ENCODE measurements at regions of chr18 and their contacts with region 1.

Region 1: GRCh38 chr18:62131301-62131909 is 55.5 kb downstream of the PIGN start:
- DNase-seq: peak; percentile 31
- H3K4me3 Mint-ChIP-seq: no peak overlapping the region
- H3K27ac Mint-ChIP-seq: no peak overlapping the region
- H3K4me1 Mint-ChIP-seq: no peaks in the 10 kb centered on the region
- H3K27me3 Mint-ChIP-seq: no peaks in the 10 kb centered on the region

Region 2: GRCh38 chr18:61322265-61322873 is 809.0 kb before region 1 on chr18:
- intact Hi-C with region 1: loop called (anchors 1 kb)
- DNase-seq: peak; percentile 16
- H3K4me3 Mint-ChIP-seq: no peak overlapping the region
- H3K27ac Mint-ChIP-seq: no peak overlapping the region
- H3K4me1 Mint-ChIP-seq: no peaks in the 10 kb centered on the region
- H3K27me3 Mint-ChIP-seq: no peaks in the 10 kb centered on the region

Region 3: DNA sequence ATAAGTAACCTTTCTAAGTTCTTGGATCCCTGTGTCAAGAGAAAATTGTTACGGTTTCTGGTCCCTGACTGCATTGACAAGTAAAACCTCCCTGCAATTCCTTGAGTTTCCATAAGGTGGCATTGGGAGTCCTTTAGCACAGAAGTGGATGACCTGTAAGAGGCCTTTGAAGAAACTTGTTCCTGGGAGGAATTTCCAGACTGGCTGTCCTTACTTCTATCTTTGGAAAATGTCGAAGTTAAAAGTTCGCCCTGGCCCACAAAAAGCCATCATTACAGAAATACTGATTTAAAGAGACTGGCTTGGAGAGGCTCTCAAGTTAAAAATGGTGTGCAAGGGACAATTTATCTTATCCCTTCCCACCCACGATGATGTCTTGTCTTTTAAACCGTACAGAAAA is 579.8 kb before region 1 on chr18:
- intact Hi-C with region 1: loop called (anchors 1 kb)
- DNase-seq: no peak
- H3K4me3 Mint-ChIP-seq: no peak overlapping the region
- H3K27ac Mint-ChIP-seq: no peak overlapping the region
- H3K4me1 Mint-ChIP-seq: peaks cover 4% of the 10 kb centered on the region
- H3K27me3 Mint-ChIP-seq: peaks cover 6% of the 10 kb centered on the region

Region 4: DNA sequence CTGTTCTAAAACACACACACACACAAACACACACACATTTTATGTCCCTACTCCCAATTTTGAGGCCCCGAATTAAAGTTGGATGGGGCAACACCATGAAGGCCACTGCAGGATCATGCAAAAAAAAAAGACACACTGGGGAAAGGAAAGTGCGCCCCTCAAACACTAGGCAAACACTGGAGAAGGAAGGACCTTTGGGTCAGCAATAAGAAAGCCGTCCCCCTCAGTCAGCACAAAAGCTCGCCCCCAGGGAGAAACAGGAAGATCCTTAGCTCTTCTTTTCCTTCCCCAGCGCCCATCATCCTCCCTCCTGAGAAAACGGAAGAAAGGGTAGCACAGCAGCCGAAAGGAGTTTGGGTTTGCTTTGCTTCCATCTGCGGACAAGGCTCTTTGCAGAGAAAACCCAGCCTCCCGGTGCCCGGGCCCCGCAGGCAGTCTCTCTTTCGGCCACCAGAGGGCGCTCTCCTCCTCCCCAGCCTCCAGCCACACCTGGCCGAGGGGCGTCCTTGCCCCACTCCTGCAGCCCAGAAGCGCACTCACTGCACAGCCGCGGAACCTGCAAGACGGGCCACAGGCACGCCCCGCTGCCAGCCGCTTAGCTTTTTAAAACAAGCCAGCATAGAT is 549.7 kb before region 1 on chr18:
- intact Hi-C with region 1: loop called (anchors 1 kb)
- DNase-seq: peak; percentile 34
- H3K4me3 Mint-ChIP-seq: no peak overlapping the region
- H3K27ac Mint-ChIP-seq: no peak overlapping the region
- H3K4me1 Mint-ChIP-seq: no peaks in the 10 kb centered on the region
- H3K27me3 Mint-ChIP-seq: peaks cover 11% of the 10 kb centered on the region

Region 5: GRCh38 chr18:61635901-61636528 is 495.4 kb before region 1 on chr18:
- intact Hi-C with region 1: loop called (anchors 1 kb)
- DNase-seq: peak; percentile 6
- H3K4me3 Mint-ChIP-seq: no peak overlapping the region
- H3K27ac Mint-ChIP-seq: no peak overlapping the region
- H3K4me1 Mint-ChIP-seq: no peaks in the 10 kb centered on the region
- H3K27me3 Mint-ChIP-seq: peaks cover 6% of the 10 kb centered on the region

Region 6: GRCh38 chr18:61860302-61860701 is 271.1 kb before region 1 on chr18:
- intact Hi-C with region 1: loop called (anchors 1 kb)
- DNase-seq: no peak
- H3K4me3 Mint-ChIP-seq: no peak overlapping the region
- H3K27ac Mint-ChIP-seq: no peak overlapping the region
- H3K4me1 Mint-ChIP-seq: no peaks in the 10 kb centered on the region
- H3K27me3 Mint-ChIP-seq: peaks cover 1% of the 10 kb centered on the region

Region 7: DNA sequence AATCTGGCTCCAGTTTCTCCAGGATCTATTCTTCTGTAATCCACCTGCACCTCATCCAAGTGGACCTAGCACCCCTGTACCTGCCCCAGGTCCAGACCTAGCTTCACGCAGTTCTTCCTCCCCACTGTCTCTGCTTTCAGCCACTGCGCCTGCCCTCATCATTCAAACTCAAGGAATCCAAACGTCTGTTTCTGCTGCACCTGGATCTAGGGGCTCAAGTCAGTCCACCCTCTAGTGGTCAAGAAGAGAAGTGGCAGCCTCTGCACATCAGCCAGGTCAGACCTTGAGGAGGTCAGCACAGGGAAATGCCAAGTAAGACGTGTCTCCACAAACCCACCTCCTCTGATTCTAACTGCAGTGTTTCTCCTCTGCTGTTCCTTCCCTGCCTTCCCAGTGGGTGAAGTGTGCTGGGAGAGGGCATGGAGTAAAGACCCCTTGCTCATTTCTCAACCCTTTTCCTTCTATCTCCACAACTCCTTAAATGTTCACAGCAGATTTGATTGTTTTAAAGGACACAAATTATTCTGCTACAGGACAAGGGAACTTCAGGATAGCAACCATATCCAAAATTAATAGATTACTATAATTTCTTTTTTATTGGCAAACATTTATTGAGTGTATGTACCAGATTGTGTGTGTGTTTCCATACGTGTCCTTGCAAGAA is 229.9 kb before region 1 on chr18:
- intact Hi-C with region 1: loop called (anchors 1 kb)
- DNase-seq: no peak
- H3K4me3 Mint-ChIP-seq: no peak overlapping the region
- H3K27ac Mint-ChIP-seq: no peak overlapping the region
- H3K4me1 Mint-ChIP-seq: no peaks in the 10 kb centered on the region
- H3K27me3 Mint-ChIP-seq: peaks cover 41% of the 10 kb centered on the region

Region 8: DNA sequence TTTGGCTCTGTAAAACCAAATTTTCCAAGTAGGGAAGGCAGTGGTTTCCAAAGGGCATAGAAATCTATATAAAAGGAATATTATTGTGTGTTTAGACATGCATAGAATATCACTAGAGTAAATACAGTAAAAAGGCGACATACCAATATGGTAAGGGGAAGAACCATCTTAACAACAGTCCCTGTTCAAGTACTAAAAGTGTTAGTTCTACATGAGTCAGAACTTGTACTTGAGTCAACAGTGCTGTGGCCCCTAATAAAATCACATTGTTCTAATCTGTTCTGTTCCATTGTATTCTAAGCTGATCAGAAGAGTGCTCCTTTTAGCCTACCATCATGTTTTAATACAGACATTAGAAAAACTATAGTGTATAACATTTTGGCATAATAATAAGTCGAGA is 157.6 kb after region 1 on chr18:
- intact Hi-C with region 1: no loop called
- DNase-seq: no peak
- H3K4me3 Mint-ChIP-seq: no peak overlapping the region
- H3K27ac Mint-ChIP-seq: no peak overlapping the region
- H3K4me1 Mint-ChIP-seq: peaks cover 23% of the 10 kb centered on the region
- H3K27me3 Mint-ChIP-seq: no peaks in the 10 kb centered on the region

Region 9: GRCh38 chr18:62663731-62664336 is 532.4 kb after region 1 on chr18:
- intact Hi-C with region 1: no loop called
- DNase-seq: no peak
- H3K4me3 Mint-ChIP-seq: no peak overlapping the region
- H3K27ac Mint-ChIP-seq: no peak overlapping the region
- H3K4me1 Mint-ChIP-seq: peaks cover 20% of the 10 kb centered on the region
- H3K27me3 Mint-ChIP-seq: peaks cover 4% of the 10 kb centered on the region

Measured in activated T-helper 1 cell treated with anti-CD3 and anti-CD28 coated beads, Interleukin-12 subunit alpha, Interleukin-12 subunit beta, Interleukin-2, Interleukin-4 antibody, amounts not matched to agents 30 ng/mL and 10 ng/mL and 1 ng/mL, durations not matched to agents 14 hours and 24 hours and 36 hours (primary cell).